Esophagus muscularis mucosa (tissue), 4 donors: ENCODE measurements at regions of chr10 and their contacts with region 1.

Region 1: GRCh38 chr10:98467506-98468346 is 21.0 kb upstream of the HPS1 start:
- DNase-seq: peak; percentile 89
- H3K4me3 ChIP-seq: peak overlapping the region; percentile 59 to 67 (median 61)
- H3K27ac ChIP-seq: no peak overlapping the region
- H3K4me1 ChIP-seq: peaks cover 8 to 17% (median 12%) of the 10 kb centered on the region in 4 donors
- H3K27me3 ChIP-seq: no peaks in the 10 kb centered on the region
- CTCF ChIP-seq: peak; percentile 75 to 86 (median 81)
- EP300 ChIP-seq: no peak
- POLR2A ChIP-seq: no peak

Region 2: GRCh38 chr10:98664331-98665042 is 196.8 kb after region 1 on chr10:
- intact Hi-C with region 1: loop called (anchors 5 kb)
- DNase-seq: no peak
- H3K4me3 ChIP-seq: no peak overlapping the region
- H3K27ac ChIP-seq: no peak overlapping the region
- H3K4me1 ChIP-seq: no peaks in the 10 kb centered on the region
- H3K27me3 ChIP-seq: no peaks in the 10 kb centered on the region
- CTCF ChIP-seq: peak; percentile 18 to 41 (median 27)
- EP300 ChIP-seq: no peak
- POLR2A ChIP-seq: no peak

Region 3: DNA sequence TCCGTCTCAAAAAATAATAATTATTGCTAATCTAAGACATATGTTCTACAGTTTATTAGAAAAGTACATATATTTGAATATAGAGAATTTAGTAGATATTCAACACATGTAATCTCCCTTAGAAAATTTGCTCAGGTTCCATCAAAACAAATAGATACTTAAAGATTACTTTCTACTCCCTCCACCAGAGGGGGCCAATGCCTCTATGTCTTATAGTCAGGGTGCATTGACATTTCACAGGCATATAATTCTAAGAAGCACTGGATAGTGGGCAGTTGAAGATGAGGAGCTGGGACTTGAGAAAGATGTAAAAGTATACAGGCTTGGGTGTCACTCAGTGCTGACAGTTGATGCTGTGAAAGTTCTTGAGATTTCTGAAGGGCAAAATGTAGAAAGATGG is 280.6 kb after region 1 on chr10:
- intact Hi-C with region 1: loop called (anchors 5 kb)
- DNase-seq: no peak
- H3K4me3 ChIP-seq: no peak overlapping the region
- H3K27ac ChIP-seq: no peak overlapping the region
- H3K4me1 ChIP-seq: no peaks in the 10 kb centered on the region
- H3K27me3 ChIP-seq: no peaks in the 10 kb centered on the region
- CTCF ChIP-seq: peak; percentile 41 to 53 (median 49)
- EP300 ChIP-seq: no peak
- POLR2A ChIP-seq: no peak

Region 4: GRCh38 chr10:99248824-99249223 is 781.1 kb after region 1 on chr10:
- intact Hi-C with region 1: loop called (anchors 2 kb)
- DNase-seq: no peak
- H3K4me3 ChIP-seq: no peak overlapping the region
- H3K27ac ChIP-seq: no peak overlapping the region
- H3K4me1 ChIP-seq: peaks cover 0 to 18% (median 7%) of the 10 kb centered on the region in 4 donors
- H3K27me3 ChIP-seq: no peaks in the 10 kb centered on the region
- CTCF ChIP-seq: no peak
- EP300 ChIP-seq: no peak
- POLR2A ChIP-seq: no peak

Region 5: GRCh38 chr10:99370993-99371392 is 903.3 kb after region 1 on chr10:
- intact Hi-C with region 1: loop called (anchors 10 kb)
- DNase-seq: no peak
- H3K4me3 ChIP-seq: no peak overlapping the region
- H3K27ac ChIP-seq: no peak overlapping the region
- H3K4me1 ChIP-seq: peaks cover 0 to 10% (median 3%) of the 10 kb centered on the region in 4 donors
- H3K27me3 ChIP-seq: no peaks in the 10 kb centered on the region
- CTCF ChIP-seq: peak; percentile 39 to 44 (median 42)
- EP300 ChIP-seq: no peak
- POLR2A ChIP-seq: no peak